Vagina (tissue), 2 donors: ENCODE measurements at regions of chr2 and their contacts with region 1.

Region 1: GRCh38 chr2:233251306-233252116 is at the start of gene ATG16L1:
- DNase-seq: peak in 1 of 2 donors; percentile 95
- H3K4me3 ChIP-seq: peak within 1 kb of the TSS; percentile 95 to 97
- H3K27ac ChIP-seq: peak within 1 kb of the TSS; percentile 78
- H3K4me1 ChIP-seq: peaks cover 33% of the 10 kb centered on the region
- H3K27me3 ChIP-seq: no peaks in the 10 kb centered on the region
- CTCF ChIP-seq: peak; percentile 76 to 96 (median 92)
- POLR2A ChIP-seq: peak in 1 of 2 donors; percentile 49
- total RNA-seq, gene ATG16L1: 29.2 TPM

Region 2: GRCh38 chr2:232609607-232610006 is 641.9 kb before region 1 on chr2:
- intact Hi-C with region 1: loop called (anchors 5 kb)
- DNase-seq: no peak
- H3K4me3 ChIP-seq: no peak overlapping the region
- H3K27ac ChIP-seq: no peak overlapping the region
- H3K4me1 ChIP-seq: no peaks in the 10 kb centered on the region
- H3K27me3 ChIP-seq: no peaks in the 10 kb centered on the region
- CTCF ChIP-seq: no peak
- POLR2A ChIP-seq: no peak

Region 3: DNA sequence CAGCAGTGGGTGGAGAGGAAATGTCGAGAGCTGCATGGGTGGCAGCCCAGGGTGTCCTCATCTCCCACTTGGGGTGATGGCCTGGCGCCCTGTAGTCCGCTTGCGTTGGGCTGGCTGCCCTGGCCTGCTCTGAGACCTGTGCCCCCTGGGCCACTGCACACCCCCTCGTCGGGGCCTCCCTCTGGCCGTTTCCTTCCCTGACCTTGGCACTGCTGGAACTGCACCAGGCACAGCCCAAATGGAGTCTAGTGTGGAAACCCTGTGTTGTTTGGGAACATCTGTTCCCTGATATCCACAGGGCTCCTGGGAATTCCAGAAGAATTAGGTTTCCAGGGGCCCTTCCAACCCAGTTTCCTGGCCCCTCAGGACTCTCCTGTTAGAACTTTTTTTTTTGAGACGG is 604.2 kb before region 1 on chr2:
- intact Hi-C with region 1: no loop called
- DNase-seq: no peak
- H3K4me3 ChIP-seq: no peak overlapping the region
- H3K27ac ChIP-seq: no peak overlapping the region
- H3K4me1 ChIP-seq: peaks cover 6% of the 10 kb centered on the region
- H3K27me3 ChIP-seq: no peaks in the 10 kb centered on the region
- CTCF ChIP-seq: no peak
- POLR2A ChIP-seq: no peak

Region 4: GRCh38 chr2:232846055-232846454 is 405.5 kb before region 1 on chr2:
- intact Hi-C with region 1: loop called (anchors 5 kb)
- DNase-seq: no peak
- H3K4me3 ChIP-seq: no peak overlapping the region
- H3K27ac ChIP-seq: no peak overlapping the region
- H3K4me1 ChIP-seq: no peaks in the 10 kb centered on the region
- H3K27me3 ChIP-seq: no peaks in the 10 kb centered on the region
- CTCF ChIP-seq: no peak
- POLR2A ChIP-seq: no peak

Region 5: DNA sequence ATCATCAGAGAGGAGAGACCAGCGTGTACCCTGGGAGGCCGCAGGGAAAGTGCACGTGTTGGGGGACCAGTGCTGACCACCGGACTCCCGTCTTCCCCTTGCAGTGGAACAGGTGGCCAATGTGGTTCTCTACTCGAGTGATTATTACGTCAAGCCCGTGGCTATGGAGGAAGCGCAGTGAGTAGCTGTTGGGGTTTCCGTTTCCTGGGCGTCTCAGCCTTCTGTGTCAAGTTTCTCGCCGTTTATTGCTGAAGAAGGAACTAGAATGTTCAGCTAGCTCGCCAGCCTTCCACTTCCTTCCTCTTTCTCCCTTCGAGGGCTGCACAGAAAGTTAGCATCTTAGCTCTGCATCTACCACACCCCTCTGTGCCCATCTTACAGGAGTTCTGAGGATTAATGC is 80.0 kb after region 1 on chr2:
- intact Hi-C with region 1: no loop called
- DNase-seq: no peak
- H3K4me3 ChIP-seq: no peak overlapping the region
- H3K27ac ChIP-seq: peak overlapping the region; percentile 53
- H3K4me1 ChIP-seq: no peaks in the 10 kb centered on the region
- H3K27me3 ChIP-seq: no peaks in the 10 kb centered on the region
- CTCF ChIP-seq: no peak
- POLR2A ChIP-seq: no peak